GM10248 (cell line): ENCODE measurements at regions of chr9 and their contacts with region 1.

Region 1: DNA sequence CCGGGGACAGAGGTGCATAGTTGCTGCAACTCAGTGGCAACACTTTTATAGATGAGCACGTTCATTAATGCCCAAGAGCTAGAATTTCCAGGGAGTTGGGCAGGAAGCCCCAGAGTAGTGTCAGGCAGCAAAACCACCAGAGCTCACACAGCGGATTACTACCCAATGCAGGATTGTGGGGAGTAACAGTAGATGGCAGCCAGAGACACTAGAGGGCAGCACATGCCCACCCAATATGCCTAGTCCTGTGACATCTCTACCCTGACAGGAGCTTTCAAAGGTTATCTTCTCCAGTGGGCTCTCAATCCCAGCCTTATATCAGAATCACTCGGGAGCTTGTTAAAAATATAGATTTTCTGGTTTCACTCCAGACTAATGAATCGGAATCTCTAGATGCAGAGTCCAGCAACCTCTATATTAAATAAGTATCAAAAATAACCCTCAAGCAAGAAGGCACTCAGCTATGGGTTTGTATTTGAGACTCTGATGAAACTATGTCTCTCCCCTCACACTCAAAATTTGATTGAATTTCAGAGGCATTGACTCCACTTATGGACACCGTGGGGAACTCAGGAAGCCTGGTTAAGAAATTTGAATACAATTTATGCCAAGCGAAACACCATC is 58.4 kb upstream of the PHF24 start:
- DNase-seq: peak; percentile 72
- CTCF ChIP-seq: peak; percentile 82

Region 2: GRCh38 chr9:34961574-34962490 is 62.2 kb after region 1 on chr9:
- CTCF ChIA-PET with region 1: interaction called, 12 read pairs
- POLR2A ChIA-PET with region 1: no interaction called
- DNase-seq: no peak
- CTCF ChIP-seq: no peak

Region 3: DNA sequence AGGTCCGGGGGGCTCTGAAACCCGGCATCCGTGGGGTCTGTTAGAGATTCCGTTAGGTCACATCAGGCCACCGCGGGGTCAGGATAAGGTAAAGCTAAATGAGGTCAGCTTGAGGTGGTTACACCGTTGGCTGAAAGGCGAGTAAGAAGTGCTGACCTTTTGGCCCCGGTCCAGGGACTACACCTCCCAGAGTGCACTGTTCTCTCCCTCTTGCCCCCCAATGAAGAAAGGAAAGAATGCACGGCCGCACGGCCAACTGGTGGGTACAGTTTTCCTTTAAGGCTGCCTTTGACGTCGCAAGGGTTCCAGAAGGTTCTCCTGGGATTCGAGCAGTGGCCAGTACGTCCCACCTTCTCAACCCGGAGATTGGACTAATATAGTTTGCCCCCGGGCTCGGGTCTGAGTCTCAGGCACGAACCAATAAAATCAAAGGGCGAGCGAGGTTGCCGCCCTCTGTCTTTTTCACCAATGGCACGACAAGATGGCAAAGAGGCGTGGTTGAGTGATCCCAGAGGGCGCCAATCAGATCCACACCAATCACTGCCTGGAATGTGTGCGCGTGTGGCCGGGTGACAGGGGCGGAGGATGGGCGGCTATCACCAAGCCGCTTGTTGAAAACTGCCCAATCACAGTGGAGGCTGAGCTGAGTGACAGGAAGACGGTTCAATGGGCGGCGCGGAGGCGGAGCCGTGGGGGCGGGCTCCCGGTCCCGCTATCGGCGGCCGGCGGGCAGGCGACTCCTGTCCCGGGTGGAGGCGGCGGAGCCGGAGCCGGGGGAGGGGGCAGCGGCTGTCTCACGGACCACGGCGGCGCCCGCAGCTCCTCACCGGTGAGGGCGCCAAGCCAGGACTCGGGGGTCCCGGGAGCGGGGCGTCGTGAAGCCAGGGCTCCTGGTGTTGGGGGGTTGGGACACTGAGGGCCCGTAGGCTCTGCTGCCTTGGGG is 89.6 kb after region 1 on chr9 and contains the start of gene DNAJB5:
- CTCF ChIA-PET with region 1: interaction called, 67 read pairs
- POLR2A ChIA-PET with region 1: no interaction called
- DNase-seq: peak; percentile 97
- CTCF ChIP-seq: no peak

Region 4: GRCh38 chr9:35051069-35051967 is 151.7 kb after region 1 on chr9:
- CTCF ChIA-PET with region 1: interaction called, 90 read pairs
- POLR2A ChIA-PET with region 1: interaction called, 3 read pairs
- DNase-seq: peak; percentile 61
- CTCF ChIP-seq: peak; percentile 65

Region 5: DNA sequence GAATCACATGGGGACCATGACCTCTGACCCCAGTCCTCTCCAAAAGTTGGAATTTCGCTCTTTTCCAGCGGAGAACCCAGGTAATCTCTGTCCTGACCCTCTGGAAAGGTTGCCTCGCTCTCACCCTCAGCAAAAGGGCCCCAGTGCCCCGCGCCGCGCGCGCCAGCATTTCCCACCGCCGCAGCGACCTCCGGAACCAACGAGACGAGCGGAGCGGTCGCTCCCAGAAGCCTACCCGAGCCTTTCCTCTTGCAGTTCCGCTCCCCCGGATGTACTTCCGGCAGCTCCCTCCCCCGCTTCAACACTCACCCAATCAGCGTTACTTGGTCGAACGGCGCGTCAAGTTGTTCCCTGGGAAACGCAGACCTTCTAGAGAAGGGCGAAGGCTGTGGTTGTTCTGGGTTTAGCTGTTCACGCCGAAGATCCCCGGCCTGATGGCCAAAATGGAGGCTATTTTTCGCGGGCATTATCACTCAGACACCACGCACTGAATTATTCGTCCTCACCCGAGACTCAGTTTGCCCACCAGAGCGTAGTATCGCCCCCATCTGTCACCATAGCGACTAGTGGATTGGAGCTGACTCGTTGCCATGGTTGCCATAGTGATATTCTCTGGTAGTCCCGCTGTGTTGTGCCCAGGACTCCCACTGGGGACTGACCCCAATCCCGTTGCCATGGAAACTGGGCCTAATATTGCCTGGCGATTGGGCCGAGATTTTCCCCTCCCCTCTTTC is 203.4 kb after region 1 on chr9 and contains the start of gene STOML2:
- CTCF ChIA-PET with region 1: interaction called, 73 read pairs
- POLR2A ChIA-PET with region 1: no interaction called
- DNase-seq: peak; percentile 95
- CTCF ChIP-seq: no peak

Region 6: DNA sequence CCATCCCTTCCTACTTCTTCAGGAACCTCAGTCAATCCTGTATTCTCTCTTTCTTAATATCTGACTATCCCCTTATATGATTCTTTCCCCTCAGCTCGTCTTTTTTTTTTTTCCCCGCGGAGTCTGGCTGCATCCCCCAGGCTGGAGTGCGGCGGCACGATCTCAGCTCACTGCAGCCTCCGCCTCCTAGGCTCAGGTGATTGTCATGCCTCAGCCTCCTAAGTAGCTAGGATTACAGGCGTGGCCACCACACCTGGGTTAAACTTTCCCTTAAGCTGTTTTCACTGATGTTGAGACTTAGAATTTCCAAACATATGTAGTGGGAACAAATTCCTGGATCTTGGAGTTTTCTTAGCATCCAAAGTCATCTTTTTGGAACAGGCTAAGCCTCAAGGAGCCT is 576.9 kb after region 1 on chr9:
- CTCF ChIA-PET with region 1: interaction called, 10 read pairs
- POLR2A ChIA-PET with region 1: no interaction called
- DNase-seq: no peak
- CTCF ChIP-seq: no peak